A549 (cell line): ENCODE measurements at regions of chr16 and their contacts with region 1.

Region 1: DNA sequence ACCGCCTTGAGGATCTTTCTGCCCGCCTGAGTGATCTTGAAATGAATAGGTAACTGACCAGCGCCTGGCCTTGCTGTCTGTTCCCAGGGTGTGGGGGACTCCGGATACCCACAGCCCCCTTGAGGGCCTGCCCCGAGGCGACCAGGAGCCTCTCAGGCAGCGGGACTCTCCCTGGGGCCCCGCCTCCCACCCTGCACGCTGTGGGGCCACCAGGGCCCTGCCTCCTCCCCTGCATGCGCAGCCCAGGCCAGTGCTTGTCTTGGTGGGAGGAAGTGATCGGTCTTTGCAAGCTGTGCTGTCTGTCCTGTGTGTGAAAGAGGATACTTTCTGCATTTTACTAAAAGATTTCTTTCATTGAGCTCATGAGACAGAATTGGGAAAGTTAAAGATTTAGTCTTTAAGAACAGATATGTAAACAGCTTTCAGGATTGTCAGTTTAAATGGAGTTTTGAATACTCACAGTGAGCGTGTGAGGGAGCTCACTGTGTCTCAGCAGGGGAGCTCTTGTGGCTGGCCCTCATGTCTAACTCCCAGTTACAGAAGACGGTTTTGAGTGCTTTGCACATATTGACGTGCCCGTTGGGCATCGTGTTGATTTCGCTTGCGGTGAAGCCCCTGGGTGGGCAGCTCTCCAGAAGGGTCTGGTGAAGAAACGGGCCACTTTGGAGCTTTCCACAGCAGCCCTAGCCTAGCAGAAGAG is 36.1 kb upstream of the CAPN15 start:
- DNase-seq: no peak
- ATAC-seq: no peak
- H3K4me3 ChIP-seq: no peak overlapping the region
- H3K27ac ChIP-seq: no peak overlapping the region
- H3K4me1 ChIP-seq: no peaks in the 10 kb centered on the region
- CTCF ChIP-seq: no peak
- EP300 ChIP-seq: no peak
- POLR2A ChIP-seq: no peak
- RAD21 ChIP-seq: no peak

Region 2: DNA sequence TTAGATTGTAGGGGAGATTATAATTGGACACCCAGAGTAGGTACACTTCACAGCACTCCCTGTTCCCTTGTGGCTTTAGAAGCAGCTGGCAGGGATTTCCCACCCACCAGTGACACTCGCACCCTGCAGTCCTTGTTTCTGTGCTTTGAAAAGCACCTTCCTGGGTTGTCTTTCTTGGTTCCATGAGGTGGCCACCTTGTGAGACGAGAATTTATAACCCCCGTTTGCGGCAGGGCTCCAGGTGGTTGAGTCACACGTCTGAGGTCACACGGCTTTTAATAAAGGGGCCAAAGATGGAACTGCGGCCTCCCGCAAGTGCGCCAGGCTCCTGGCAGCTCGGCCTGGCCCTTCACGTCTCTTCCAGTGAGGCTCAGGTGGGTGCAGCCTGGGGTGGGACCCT is 13.6 kb before region 1 on chr16:
- CTCF ChIA-PET with region 1: interaction called, 17 read pairs
- POLR2A ChIA-PET with region 1: no interaction called
- DNase-seq: no peak
- ATAC-seq: no peak; a peak in 1 of 6 replicates
- H3K4me3 ChIP-seq: no peak overlapping the region
- H3K27ac ChIP-seq: no peak overlapping the region; a peak in 1 of 6 replicates
- H3K4me1 ChIP-seq: no peaks in the 10 kb centered on the region
- CTCF ChIP-seq: no peak
- EP300 ChIP-seq: no peak
- POLR2A ChIP-seq: no peak
- RAD21 ChIP-seq: no peak

Region 3: GRCh38 chr16:502179-502943 is 11.0 kb after region 1 on chr16:
- CTCF ChIA-PET with region 1: interaction called, 30 read pairs
- POLR2A ChIA-PET with region 1: no interaction called
- DNase-seq: no peak
- ATAC-seq: peak; percentile 45 to 49; a peak in 4 of 6 replicates
- H3K4me3 ChIP-seq: no peak overlapping the region
- H3K27ac ChIP-seq: no peak overlapping the region
- H3K4me1 ChIP-seq: peaks cover 8% of the 10 kb centered on the region
- CTCF ChIP-seq: no peak
- EP300 ChIP-seq: no peak
- POLR2A ChIP-seq: no peak
- RAD21 ChIP-seq: no peak

Region 4: DNA sequence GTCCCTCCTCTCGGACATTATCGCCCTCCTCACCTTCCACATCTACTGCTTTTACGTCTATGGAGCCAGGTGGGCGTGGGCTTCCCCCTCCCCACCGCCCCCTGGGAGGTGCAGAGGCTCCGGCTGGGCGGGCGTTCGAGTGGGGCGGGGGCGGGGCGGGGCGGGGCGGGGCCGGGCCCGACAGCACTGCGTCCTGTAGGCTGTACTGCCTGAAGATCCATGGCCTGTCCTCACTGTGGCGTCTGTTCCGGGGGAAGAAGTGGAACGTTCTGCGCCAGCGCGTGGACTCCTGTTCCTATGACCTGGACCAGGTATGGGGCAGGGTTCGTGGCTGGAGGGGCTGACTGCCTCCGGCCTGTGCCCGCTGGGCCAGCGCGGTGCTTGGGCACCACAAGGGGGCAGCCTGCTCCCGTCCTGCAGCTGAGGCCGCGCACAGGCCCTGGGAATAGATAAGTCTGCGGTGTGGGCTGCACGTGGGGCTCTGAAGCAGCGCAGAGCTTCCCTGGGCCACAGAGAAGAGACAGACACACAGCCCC is 87.6 kb after region 1 on chr16:
- CTCF ChIA-PET with region 1: no interaction called
- POLR2A ChIA-PET with region 1: no interaction called
- DNase-seq: peak; percentile 61 to 84
- ATAC-seq: peak; percentile 72 to 89
- H3K4me3 ChIP-seq: 0 out of 3 replicates have a peak overlapping the region, but pooled peaks have one; percentile 29
- H3K27ac ChIP-seq: peak overlapping the region in 1 of 2 experiments; percentile 78; a peak in 2 of 6 replicates
- H3K4me1 ChIP-seq: peaks cover 6% of the 10 kb centered on the region; the same call in 2 of the 3 replicates
- CTCF ChIP-seq: peak; percentile 82
- EP300 ChIP-seq: no peak
- POLR2A ChIP-seq: no peak
- RAD21 ChIP-seq: peak; percentile 82

Region 5: GRCh38 chr16:886084-886543 is 394.7 kb after region 1 on chr16:
- CTCF ChIA-PET with region 1: no interaction called
- POLR2A ChIA-PET with region 1: no interaction called
- DNase-seq: no peak
- ATAC-seq: no peak
- H3K4me3 ChIP-seq: no peak overlapping the region
- H3K27ac ChIP-seq: no peak overlapping the region
- H3K4me1 ChIP-seq: no peaks in the 10 kb centered on the region
- CTCF ChIP-seq: no peak
- EP300 ChIP-seq: no peak
- POLR2A ChIP-seq: no peak
- RAD21 ChIP-seq: no peak

Region 6: DNA sequence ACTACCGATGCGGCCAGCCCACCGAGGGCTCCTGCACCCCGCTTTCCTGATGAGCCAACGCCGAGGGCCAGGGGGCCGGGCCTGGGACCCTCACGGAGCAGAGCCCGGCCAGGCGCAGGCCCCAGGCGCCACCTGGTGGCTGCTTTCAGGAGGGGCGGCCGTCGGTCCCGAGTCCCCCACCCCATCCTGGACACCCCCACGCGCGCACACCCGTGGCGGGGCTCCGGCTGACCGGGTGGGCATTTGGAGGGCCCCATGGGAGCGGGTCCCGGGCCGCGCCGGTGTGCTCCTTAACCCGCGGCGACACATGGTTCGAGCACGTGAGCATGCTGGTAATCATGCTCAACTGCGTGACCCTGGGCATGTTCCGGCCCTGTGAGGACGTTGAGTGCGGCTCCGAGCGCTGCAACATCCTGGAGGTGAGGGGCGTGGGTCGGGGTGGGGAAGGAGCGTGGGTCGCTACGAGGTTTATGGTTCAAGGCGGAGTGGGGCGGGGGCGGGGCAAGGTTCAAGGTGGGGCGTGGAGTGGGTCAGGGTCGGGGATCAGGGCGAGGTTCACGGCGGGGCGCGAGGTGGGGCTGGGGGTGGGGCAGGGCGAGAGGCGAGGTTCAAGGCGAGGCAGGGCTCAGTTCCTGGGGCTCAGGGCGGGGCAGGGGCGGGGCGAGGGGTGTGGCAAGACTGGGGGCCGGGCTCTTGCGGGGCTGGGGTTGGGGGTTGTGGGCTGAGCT is 703.5 kb after region 1 on chr16:
- CTCF ChIA-PET with region 1: no interaction called
- POLR2A ChIA-PET with region 1: no interaction called
- DNase-seq: no peak
- ATAC-seq: peak; percentile 21 to 65; a peak in 3 of 6 replicates
- H3K4me3 ChIP-seq: no peak overlapping the region
- H3K27ac ChIP-seq: peak overlapping the region in 1 of 2 experiments; percentile 57; a peak in 3 of 6 replicates
- H3K4me1 ChIP-seq: peaks cover 27% of the 10 kb centered on the region
- CTCF ChIP-seq: peak; percentile 89
- EP300 ChIP-seq: no peak
- POLR2A ChIP-seq: no peak
- RAD21 ChIP-seq: peak; percentile 83 to 95